ENCODE measurements at regions of chr12 and their contacts with region 1.

Region 1: GRCh38 chr12:98939350-98939749 is 294.3 kb downstream of the APAF1 start:
- DNase-seq: no peak
- H3K4me3 ChIP-seq: no peak overlapping the region
- H3K27ac ChIP-seq: no peak overlapping the region
- H3K4me1 ChIP-seq: peaks cover 0 to 7% (median 2%) of the 10 kb centered on the region in 4 experiments; a peak in 2 of 7 replicates
- H3K27me3 ChIP-seq: no peaks in the 10 kb centered on the region
- CTCF ChIP-seq: peak in 2 of 3 experiments; percentile 76 to 78; a peak in 3 of 4 replicates
- EP300 ChIP-seq: no peak
- POLR2A ChIP-seq: no peak
- RAD21 ChIP-seq: peak; percentile 85 to 90

Region 2: DNA sequence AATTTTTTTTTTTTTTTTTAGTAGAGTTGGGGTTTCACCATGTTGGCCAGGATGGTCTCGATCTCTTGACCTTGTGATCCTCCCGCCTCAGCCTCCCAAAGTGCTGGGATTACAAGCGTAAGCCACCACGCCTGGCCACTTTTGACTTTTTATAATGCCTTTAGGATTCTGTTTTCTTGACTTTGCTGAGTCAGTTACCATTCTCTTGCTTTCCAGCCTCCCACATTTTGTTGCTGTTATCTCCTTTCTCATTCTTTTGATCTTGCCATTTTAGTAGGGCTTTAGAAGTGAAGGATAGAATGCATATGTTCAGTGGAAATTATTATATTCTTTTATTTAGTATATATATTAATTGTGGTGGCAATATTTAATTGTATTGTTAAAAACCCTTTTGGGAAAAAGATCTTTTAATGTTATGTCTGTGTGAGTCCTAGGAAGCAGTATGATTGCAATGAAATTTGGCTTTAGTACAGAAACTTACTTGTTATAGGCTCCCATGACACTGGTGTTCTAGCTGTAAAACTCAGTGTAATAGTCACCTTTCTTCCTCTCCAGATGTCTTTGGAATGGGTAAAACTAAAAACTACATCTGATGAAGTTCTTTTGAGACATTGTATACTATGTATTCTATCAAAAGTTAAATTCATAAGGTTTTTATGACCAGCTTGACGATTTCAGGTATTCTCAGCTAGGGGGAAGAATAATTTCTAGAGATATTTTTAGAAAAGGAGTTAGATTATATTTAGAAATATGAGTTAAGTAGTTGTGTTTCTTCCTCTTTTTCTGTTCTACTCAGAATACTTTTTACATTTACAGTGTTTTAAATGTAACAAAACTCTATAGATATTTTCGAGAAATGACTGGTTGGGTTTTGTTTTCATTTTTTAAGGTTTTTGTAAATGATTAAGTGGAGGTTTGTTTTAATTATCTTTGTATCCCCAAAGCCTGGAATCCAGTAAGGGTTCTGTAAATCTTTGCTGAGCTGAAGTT is 219.5 kb before region 1 on chr12:
- CTCF ChIA-PET with region 1: interaction called, 37 read pairs
- POLR2A ChIA-PET with region 1: no interaction called
- DNase-seq: no peak
- H3K4me3 ChIP-seq: no peak overlapping the region
- H3K27ac ChIP-seq: no peak overlapping the region
- H3K4me1 ChIP-seq: no peaks in the 10 kb centered on the region
- H3K27me3 ChIP-seq: no peaks in the 10 kb centered on the region
- CTCF ChIP-seq: no peak
- EP300 ChIP-seq: no peak
- POLR2A ChIP-seq: no peak
- RAD21 ChIP-seq: no peak

Region 3: GRCh38 chr12:98743347-98743953 is 195.9 kb before region 1 on chr12:
- CTCF ChIA-PET with region 1: interaction called, 23 read pairs
- POLR2A ChIA-PET with region 1: no interaction called
- DNase-seq: peak in 1 of 2 experiments; percentile 63
- H3K4me3 ChIP-seq: no peak overlapping the region
- H3K27ac ChIP-seq: no peak overlapping the region
- H3K4me1 ChIP-seq: peaks cover 0 to 12% (median 3%) of the 10 kb centered on the region in 4 experiments; a peak in 5 of 7 replicates
- H3K27me3 ChIP-seq: peaks cover 0 to 12% (median 7%) of the 10 kb centered on the region in 4 experiments; a peak in 5 of 7 replicates
- CTCF ChIP-seq: peak; percentile 63 to 85 (median 74)
- EP300 ChIP-seq: no peak
- POLR2A ChIP-seq: no peak
- RAD21 ChIP-seq: peak; percentile 50 to 62

Region 4: GRCh38 chr12:98883231-98883630 is 56.1 kb before region 1 on chr12:
- CTCF ChIA-PET with region 1: no interaction called
- POLR2A ChIA-PET with region 1: no interaction called
- DNase-seq: no peak
- H3K4me3 ChIP-seq: no peak overlapping the region
- H3K27ac ChIP-seq: no peak overlapping the region
- H3K4me1 ChIP-seq: peaks cover 0 to 4% (median 0%) of the 10 kb centered on the region in 4 experiments; a peak in 1 of 7 replicates
- H3K27me3 ChIP-seq: peaks cover 0 to 1% (median 0%) of the 10 kb centered on the region in 4 experiments; a peak in 1 of 7 replicates
- CTCF ChIP-seq: no peak
- EP300 ChIP-seq: no peak
- POLR2A ChIP-seq: no peak
- RAD21 ChIP-seq: no peak

Region 5: GRCh38 chr12:98903875-98904274 is 35.5 kb before region 1 on chr12:
- CTCF ChIA-PET with region 1: interaction called, 15 read pairs
- POLR2A ChIA-PET with region 1: no interaction called
- DNase-seq: no peak
- H3K4me3 ChIP-seq: no peak overlapping the region
- H3K27ac ChIP-seq: no peak overlapping the region
- H3K4me1 ChIP-seq: no peaks in the 10 kb centered on the region
- H3K27me3 ChIP-seq: no peaks in the 10 kb centered on the region
- CTCF ChIP-seq: no peak
- EP300 ChIP-seq: no peak
- POLR2A ChIP-seq: no peak
- RAD21 ChIP-seq: no peak

Region 6: DNA sequence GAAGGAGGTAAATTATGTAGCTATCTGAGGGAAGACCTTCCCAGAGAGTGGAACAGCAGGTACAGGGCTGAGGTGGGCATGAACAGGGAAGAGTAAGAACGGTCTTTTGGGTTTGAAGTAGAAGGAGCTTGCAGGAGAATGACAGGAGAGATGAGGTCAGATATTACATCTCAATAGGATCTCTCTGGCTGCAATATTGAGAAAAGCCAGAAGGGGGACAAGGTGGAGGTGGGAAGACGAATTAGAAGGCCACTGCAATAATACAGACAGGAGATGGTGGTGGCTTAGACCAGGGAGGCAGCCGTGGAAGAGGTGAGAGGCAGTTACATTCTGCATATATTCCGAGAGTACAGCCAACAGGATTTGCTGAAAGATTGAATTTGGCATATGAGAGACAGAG is 15.9 kb after region 1 on chr12:
- CTCF ChIA-PET with region 1: interaction called, 36 read pairs
- POLR2A ChIA-PET with region 1: no interaction called
- DNase-seq: peak; percentile 31 to 57
- H3K4me3 ChIP-seq: no peak overlapping the region
- H3K27ac ChIP-seq: no peak overlapping the region
- H3K4me1 ChIP-seq: no peaks in the 10 kb centered on the region
- H3K27me3 ChIP-seq: no peaks in the 10 kb centered on the region
- CTCF ChIP-seq: peak in 2 of 3 experiments; percentile 56 to 63; a peak in 3 of 4 replicates
- EP300 ChIP-seq: no peak
- POLR2A ChIP-seq: no peak
- RAD21 ChIP-seq: peak; percentile 55 to 65